GM13977 (cell line): ENCODE measurements at regions of chr3 and their contacts with region 1.

Region 1: GRCh38 chr3:32703491-32703972 is 18.5 kb downstream of the CNOT10 start:
- DNase-seq: no peak
- CTCF ChIP-seq: no peak

Region 2: DNA sequence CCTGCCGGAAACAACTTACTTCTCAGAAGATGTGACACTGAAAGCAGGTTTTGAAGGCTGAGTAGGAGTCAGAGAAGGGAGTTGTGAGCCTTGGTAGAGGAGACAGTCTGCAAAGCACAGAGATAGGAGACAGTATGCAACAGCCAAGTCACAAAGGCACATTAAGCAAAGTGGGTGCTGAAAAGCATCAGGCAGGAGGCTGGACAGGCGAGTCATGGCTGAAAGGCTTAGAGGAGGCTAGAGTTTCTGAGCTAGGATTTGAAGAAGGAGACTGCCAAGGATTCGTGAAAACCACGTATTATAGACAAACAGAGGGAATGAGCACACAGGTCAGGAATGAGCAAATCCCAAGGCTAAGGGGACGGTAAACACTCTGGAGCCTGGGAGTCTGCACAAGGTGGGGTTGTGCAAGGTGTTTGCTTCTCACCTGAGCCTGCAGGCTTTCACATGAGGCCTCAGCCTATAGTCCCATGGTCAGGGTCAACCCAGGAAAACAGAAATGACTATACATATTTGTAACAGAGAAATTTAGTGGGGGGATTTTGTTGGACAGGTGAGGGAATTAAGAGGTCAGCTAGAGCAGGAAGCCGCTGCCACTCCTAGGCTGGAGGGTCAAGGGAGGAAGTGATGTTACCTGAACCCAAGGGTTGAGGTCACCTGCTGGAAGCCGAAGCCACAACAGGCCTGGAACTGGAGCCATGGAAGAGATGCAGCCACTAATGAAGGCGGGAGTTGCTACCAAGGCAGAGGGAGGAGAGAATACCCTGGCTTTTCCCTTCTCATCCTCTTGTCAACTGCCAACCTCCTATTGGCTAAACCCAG is 91.2 kb after region 1 on chr3:
- in situ Hi-C with region 1: no loop called
- DNase-seq: no peak
- CTCF ChIP-seq: no peak

Region 3: DNA sequence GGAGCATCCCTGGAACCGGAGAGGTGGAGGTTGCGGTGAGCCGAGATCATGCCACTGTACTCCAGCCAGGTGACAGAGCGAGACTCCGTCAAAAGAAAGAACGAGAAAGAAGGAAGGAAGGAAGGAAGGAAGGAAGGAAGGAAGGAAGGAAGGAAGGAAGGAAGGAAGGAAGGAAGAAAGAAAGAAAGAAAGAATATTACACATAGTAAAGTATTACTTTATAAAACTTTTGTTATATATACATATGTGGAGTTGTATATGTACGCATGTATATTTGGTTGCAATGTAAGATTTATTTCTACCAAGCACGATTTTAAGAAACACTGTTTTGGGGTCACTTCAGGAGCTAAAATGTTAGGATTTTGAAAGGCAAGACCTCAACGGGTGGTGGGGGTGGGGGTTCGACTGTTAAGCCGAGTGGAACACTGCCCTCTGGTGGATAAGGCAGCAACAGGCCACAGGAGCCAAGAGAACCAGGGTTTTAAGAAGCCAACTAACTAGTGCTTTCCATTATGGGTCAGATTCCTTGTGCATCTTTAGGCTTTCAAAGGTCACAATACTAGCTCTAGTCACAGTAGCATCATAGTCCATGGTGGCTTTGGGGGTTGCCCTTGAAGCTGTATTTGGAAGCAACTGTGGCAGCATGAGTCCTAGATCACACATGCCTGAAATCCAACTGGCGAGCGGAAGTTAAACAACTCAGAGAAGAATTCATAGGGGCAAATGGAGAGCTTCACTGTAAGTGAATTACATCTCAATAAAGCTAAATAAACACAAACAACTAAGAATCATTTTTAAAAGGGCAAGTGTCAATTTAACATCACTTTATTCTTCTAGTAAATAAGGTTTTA is 370.9 kb after region 1 on chr3:
- in situ Hi-C with region 1: loop called (anchors 25 kb)
- DNase-seq: peak; percentile 79
- CTCF ChIP-seq: peak; percentile 93